HCT116 (cell line): ENCODE measurements at regions of chr1 and their contacts with region 1.

Region 1: GRCh38 chr1:202810615-202811295 is at the start of gene PCAT6:
- DNase-seq: peak; percentile 86
- ATAC-seq: peak; percentile 92
- H3K4me3 ChIP-seq: peak within 1 kb of the TSS; percentile 51 to 57
- H3K27ac ChIP-seq: peak within 1 kb of the TSS; percentile 49; the same call in 1 of the 2 replicates
- H3K4me1 ChIP-seq: peaks cover 22 to 48% of the 10 kb centered on the region in 2 experiments
- H3K27me3 ChIP-seq: no peaks in the 10 kb centered on the region
- CTCF ChIP-seq: no peak
- POLR2A ChIP-seq: peak; percentile 53
- RAD21 ChIP-seq: no peak
- total RNA-seq, gene PCAT6: 1.9 TPM

Region 2: GRCh38 chr1:202376247-202376646 is 434.5 kb before region 1 on chr1:
- CTCF ChIA-PET with region 1: no interaction called
- POLR2A ChIA-PET with region 1: no interaction called
- RAD21 ChIA-PET with region 1: no interaction called
- intact Hi-C with region 1: no loop called
- DNase-seq: no peak
- ATAC-seq: no peak
- H3K4me3 ChIP-seq: no peak overlapping the region
- H3K27ac ChIP-seq: no peak overlapping the region
- H3K4me1 ChIP-seq: peaks cover 19 to 24% of the 10 kb centered on the region in 2 experiments
- H3K27me3 ChIP-seq: no peaks in the 10 kb centered on the region
- CTCF ChIP-seq: no peak
- POLR2A ChIP-seq: no peak
- RAD21 ChIP-seq: no peak

Region 3: GRCh38 chr1:202852163-202852904 is 41.6 kb after region 1 on chr1:
- CTCF ChIA-PET with region 1: no interaction called
- POLR2A ChIA-PET with region 1: interaction called, 6 read pairs
- RAD21 ChIA-PET with region 1: no interaction called
- intact Hi-C with region 1: loop called (anchors 5 kb)
- DNase-seq: peak; percentile 70
- ATAC-seq: peak; percentile 99
- H3K4me3 ChIP-seq: no peak overlapping the region
- H3K27ac ChIP-seq: no peak overlapping the region
- H3K4me1 ChIP-seq: peaks cover 0 to 4% of the 10 kb centered on the region in 2 experiments; a peak in 2 of 4 replicates
- H3K27me3 ChIP-seq: no peaks in the 10 kb centered on the region
- CTCF ChIP-seq: peak; percentile 74 to 86 (median 84)
- POLR2A ChIP-seq: no peak
- RAD21 ChIP-seq: peak; percentile 83

Region 4: DNA sequence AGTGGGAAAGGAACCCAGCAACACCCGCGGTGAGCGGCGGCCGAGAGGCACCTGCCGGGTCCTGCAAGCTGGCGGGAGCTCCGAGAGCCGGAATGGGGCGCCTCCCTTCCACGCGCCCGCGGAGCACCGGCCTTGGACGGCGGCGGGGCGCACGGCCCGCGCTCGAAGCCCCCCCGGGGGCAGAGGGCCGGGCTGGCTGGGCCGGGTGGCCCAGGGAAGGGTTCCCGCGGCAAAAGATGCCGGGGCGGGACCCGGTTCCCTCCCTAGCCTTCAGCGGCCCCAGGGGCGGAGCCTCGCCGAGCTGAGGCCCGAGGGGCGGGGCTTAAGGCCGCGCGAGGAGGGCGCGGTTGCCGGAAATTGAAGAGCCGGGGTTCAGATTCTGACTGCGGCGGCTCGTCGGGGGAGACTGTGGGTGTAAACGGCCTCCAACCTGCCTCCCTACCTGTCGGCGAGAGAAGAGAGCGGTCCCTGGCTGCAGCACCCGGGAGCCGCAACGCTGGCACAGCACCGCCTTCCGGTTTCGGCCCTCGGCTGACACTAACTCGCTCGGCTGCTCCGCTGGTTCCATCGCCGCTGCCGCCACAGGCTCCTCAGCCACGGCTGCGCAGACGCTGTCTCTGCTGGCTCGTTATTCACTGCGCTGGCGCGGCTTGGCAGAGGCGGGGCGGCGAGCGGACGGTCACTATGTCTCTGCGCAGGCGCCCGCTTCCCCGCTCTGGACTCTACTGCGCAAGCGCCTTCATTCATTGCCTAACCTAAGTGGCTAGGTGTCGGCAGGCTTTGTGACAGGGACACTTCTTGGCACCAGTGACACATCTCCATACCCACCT is 78.0 kb after region 1 on chr1 and contains the start of gene RABIF:
- CTCF ChIA-PET with region 1: no interaction called
- POLR2A ChIA-PET with region 1: no interaction called
- RAD21 ChIA-PET with region 1: no interaction called
- intact Hi-C with region 1: loop called (anchors 2 kb)
- DNase-seq: peak; percentile 88
- ATAC-seq: peak; percentile 96
- H3K4me3 ChIP-seq: peak within 1 kb of the TSS; percentile 67 to 84
- H3K27ac ChIP-seq: peak within 1 kb of the TSS; percentile 90
- H3K4me1 ChIP-seq: peaks cover 6 to 14% of the 10 kb centered on the region in 2 experiments; a peak in 3 of 4 replicates
- H3K27me3 ChIP-seq: no peaks in the 10 kb centered on the region
- CTCF ChIP-seq: peak in 1 of 3 experiments; percentile 13; a peak in 1 of 6 replicates
- POLR2A ChIP-seq: peak; percentile 89
- RAD21 ChIP-seq: no peak
- total RNA-seq, gene RABIF: 5.4 TPM